Common myeloid progenitor, CD34-positive (primary cell): ENCODE measurements at regions of chr19 and their contacts with region 1.

Region 1: DNA sequence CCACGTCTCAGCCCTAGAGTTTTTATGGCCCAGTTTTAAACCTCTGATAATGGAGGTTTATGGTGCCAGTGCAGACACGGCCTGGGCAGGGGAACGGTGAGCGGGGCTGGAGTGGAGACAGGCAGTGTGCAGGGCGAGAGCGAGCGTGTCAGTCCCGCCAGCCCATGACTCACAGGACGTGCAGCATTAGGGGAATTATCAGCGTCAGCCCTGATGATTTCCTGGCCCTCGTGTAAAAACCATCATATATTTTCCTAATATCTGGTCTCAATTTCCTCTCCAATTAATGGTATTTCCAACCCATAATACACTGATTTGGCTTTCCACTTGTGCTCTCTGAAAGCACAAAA is 104.6 kb upstream of the VSTM2B start:
- DNase-seq: no peak
- H3K4me3 ChIP-seq: no peak overlapping the region
- H3K27ac ChIP-seq: no peak overlapping the region
- H3K4me1 ChIP-seq: no peaks in the 10 kb centered on the region
- H3K27me3 ChIP-seq: peaks cover 0 to 3% (median 0%) of the 10 kb centered on the region in 5 experiments

Region 2: DNA sequence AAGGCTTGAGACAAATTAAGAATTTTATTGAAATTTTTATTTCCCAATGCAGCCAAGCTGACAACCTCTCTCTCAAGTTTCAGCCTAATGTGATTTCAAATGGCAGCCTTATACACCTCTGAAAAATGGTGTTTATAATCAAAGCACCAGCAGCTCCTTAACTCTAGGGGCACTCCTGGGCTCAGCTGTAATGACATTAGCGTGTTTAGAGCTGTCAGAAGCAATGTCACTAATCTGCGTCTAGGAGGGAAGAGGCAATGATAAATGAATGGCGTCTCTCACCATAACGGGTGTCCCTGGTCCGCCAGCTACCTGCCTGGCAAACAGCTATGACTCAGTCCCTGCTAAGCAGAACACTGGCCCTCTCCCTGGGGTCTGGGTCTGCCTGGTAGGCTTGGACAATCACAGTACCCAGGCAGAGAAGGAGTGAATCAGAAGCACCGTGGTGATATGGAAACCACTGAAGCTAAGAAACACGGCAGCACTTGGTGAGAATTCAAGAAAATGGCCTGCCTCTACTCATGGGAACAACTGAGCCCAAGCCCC is 27.2 kb before region 1 on chr19:
- CTCF ChIA-PET with region 1: no interaction called
- POLR2A ChIA-PET with region 1: no interaction called
- DNase-seq: no peak
- H3K4me3 ChIP-seq: no peak overlapping the region
- H3K27ac ChIP-seq: no peak overlapping the region
- H3K4me1 ChIP-seq: no peaks in the 10 kb centered on the region
- H3K27me3 ChIP-seq: peaks cover 0 to 10% (median 4%) of the 10 kb centered on the region in 5 experiments

Region 3: DNA sequence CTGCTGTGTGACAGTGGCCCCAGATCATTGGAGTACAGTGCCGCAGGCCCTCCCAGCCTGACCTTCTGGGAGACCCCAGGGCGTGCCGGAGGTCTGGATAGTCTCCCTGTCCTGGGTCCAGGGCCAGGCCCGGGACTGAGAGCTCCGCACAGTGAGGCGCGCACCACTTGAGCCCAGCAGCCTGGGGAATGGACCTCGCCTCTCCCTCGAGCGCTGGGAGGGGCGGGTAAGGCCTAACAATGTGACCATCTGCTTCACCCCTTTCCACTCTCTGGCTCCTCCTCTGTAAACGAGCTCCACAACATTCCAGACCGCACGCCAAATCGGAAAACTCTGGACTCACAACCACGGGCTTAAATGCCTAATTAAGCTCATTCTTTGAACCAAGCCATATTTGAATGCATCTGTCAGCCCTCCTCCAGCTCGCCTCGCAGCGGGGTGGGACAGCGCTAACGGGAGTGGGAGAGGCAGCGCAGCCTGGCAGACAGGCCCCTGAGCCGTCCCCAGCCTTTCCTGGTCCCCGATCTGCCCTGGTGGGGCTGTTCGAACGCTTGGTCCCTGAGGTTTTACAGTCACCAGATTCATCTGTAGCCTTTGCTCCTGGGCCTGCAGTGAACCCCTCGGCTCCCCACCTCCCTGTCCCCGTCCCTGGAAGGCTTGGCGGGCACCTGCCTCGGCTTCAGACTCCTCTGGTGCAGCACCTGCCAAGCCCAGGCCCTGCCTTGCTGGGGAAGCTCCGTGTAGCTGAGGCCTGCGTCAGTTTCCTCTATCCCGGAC is 16.0 kb before region 1 on chr19:
- CTCF ChIA-PET with region 1: no interaction called
- POLR2A ChIA-PET with region 1: interaction called, 12 read pairs
- DNase-seq: no peak
- H3K4me3 ChIP-seq: no peak overlapping the region
- H3K27ac ChIP-seq: no peak overlapping the region
- H3K4me1 ChIP-seq: no peaks in the 10 kb centered on the region
- H3K27me3 ChIP-seq: peaks cover 0 to 34% (median 2%) of the 10 kb centered on the region in 5 experiments

Region 4: DNA sequence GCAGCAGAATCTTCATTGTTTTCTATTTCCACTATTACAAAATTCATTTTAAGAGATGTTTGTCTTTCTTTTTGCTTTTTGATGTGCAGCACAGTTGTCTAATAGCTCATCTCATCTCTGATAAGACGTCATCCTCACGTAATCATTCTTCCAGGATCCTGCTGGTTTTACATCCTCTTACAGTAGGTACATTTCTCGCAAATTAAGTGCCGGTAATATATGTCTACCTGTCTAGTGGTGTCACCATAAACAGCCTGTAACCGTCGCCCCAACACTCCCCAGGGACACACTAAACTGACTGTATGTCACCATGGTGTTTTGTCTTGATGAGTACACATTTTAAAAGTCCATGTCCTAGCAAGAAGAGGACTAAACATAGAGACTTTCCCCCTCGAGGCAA is 10.2 kb after region 1 on chr19:
- CTCF ChIA-PET with region 1: no interaction called
- POLR2A ChIA-PET with region 1: no interaction called
- DNase-seq: no peak
- H3K4me3 ChIP-seq: no peak overlapping the region
- H3K27ac ChIP-seq: no peak overlapping the region
- H3K4me1 ChIP-seq: no peaks in the 10 kb centered on the region
- H3K27me3 ChIP-seq: no peaks in the 10 kb centered on the region